Heart right ventricle (tissue), 16 donors: ENCODE measurements at regions of chr10 and their contacts with region 1.

Region 1: GRCh38 chr10:3323865-3324498 is 151.4 kb upstream of the PITRM1 start:
- DNase-seq: peak in 1 of 2 donors; percentile 11
- ATAC-seq: peak in 6 of 8 donors; percentile 38 to 83 (median 78)
- H3K4me3 ChIP-seq: no peak overlapping the region
- H3K27ac ChIP-seq: no peak overlapping the region
- H3K4me1 ChIP-seq: peaks cover 0 to 10% (median 0%) of the 10 kb centered on the region in 9 donors
- H3K27me3 ChIP-seq: no peaks in the 10 kb centered on the region
- CTCF ChIP-seq: no peak

Region 2: DNA sequence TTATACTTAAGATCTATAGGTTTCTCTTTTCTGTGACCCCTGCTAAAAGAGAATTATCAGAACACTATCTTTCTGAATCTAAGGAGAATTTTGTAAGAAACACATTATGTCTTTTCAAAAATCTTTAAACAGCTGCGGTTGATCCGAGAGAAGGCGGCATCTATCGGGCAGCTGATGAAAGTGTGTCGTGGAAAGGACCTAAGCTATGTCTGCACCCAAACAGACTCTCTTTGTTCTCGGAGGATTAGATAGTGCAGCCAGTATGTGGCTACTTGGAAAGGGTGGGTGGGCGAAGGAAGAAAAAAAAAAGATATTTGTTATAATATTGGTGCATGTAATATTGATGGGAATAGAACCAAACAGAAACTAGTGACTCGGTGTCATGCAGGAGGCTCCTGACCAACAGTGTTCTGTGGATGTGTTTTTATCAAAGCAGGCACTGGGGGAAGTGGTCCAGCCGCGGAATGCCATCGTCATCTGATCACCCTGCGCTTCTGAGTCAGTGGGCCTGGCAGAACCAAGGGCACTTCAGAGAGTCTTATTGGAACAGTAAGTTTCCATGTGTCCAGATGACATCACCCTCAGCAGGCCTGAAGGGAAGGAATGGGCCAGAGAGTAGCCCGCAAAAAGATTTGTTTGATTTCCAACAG is 992.3 kb after region 1 on chr10:
- intact Hi-C with region 1: loop called in 1 of 10 experiments (anchors 10 kb)
- DNase-seq: peak; percentile 22 to 29
- ATAC-seq: peak; percentile 41 to 84 (median 72)
- H3K4me3 ChIP-seq: no peak overlapping the region
- H3K27ac ChIP-seq: peak overlapping the region in 8 of 10 donors; percentile 23 to 75 (median 56)
- H3K4me1 ChIP-seq: peaks cover 0 to 32% (median 4%) of the 10 kb centered on the region in 9 donors
- H3K27me3 ChIP-seq: no peaks in the 10 kb centered on the region
- CTCF ChIP-seq: peak in 2 of 9 donors; percentile 21 to 31